Activated T-helper 2 cell treated with anti-CD3 and anti-CD28 coated beads, Interferon-gamma antibody, Interleukin-2, Interleukin-4, amounts not matched to agents 10 μg/mL and 5 μg/mL and 100 μg/mL, durations not matched to agents 14 hours and 24 hours and 36 hours (primary cell): ENCODE measurements at regions of chr20 and their contacts with region 1.

Region 1: GRCh38 chr20:23160536-23161243 is 74.6 kb upstream of the CD93 start:
- DNase-seq: no peak
- H3K4me3 Mint-ChIP-seq: no peak overlapping the region
- H3K27ac Mint-ChIP-seq: no peak overlapping the region
- H3K4me1 Mint-ChIP-seq: peaks cover 12% of the 10 kb centered on the region
- H3K27me3 Mint-ChIP-seq: no peaks in the 10 kb centered on the region

Region 2: GRCh38 chr20:23147964-23148730 is 12.5 kb before region 1 on chr20:
- intact Hi-C with region 1: loop called (anchors 1 kb)
- DNase-seq: peak; percentile 20
- H3K4me3 Mint-ChIP-seq: peak overlapping the region; percentile 38
- H3K27ac Mint-ChIP-seq: peak overlapping the region; percentile 91
- H3K4me1 Mint-ChIP-seq: peaks cover 64% of the 10 kb centered on the region
- H3K27me3 Mint-ChIP-seq: peaks cover 5% of the 10 kb centered on the region

Region 3: GRCh38 chr20:23340524-23340923 is 179.8 kb after region 1 on chr20:
- intact Hi-C with region 1: no loop called
- DNase-seq: no peak
- H3K4me3 Mint-ChIP-seq: no peak overlapping the region
- H3K27ac Mint-ChIP-seq: no peak overlapping the region
- H3K4me1 Mint-ChIP-seq: peaks cover 7% of the 10 kb centered on the region
- H3K27me3 Mint-ChIP-seq: peaks cover 2% of the 10 kb centered on the region